Breast epithelium (tissue), 4 donors: ENCODE measurements at regions of chr1 and their contacts with region 1.

Region 1: GRCh38 chr1:28886731-28887418 is 27.5 kb upstream of the EPB41 start:
- DNase-seq: peak; percentile 82 to 87
- H3K4me3 ChIP-seq: peak overlapping the region; percentile 60 to 84 (median 82)
- H3K27ac ChIP-seq: peak overlapping the region; percentile 70 to 86
- H3K4me1 ChIP-seq: no peaks in the 10 kb centered on the region
- H3K27me3 ChIP-seq: no peaks in the 10 kb centered on the region
- CTCF ChIP-seq: peak in 1 of 3 donors; percentile 21
- POLR2A ChIP-seq: no peak

Region 2: DNA sequence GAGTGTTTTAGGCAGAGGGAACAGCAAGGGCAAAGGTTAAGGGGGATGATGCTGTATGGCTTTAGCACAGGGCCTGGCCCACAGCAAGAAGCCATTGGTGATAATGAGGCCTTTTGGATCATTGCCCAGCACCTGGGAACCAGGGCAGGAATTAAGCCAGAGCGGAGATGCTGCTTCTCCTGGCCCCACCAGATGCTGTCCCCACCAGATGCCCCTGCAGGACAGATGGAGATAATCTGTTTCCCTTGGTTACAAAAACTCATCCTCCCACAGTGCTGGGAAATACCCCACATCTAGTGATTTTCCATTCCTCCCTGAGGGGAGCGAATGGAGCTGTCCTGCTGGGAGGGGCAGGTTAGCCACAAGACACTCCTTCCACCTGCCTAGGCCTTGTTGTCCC is 56.1 kb before region 1 on chr1:
- intact Hi-C with region 1: no loop called
- DNase-seq: no peak
- H3K4me3 ChIP-seq: no peak overlapping the region
- H3K27ac ChIP-seq: no peak overlapping the region
- H3K4me1 ChIP-seq: no peaks in the 10 kb centered on the region
- H3K27me3 ChIP-seq: no peaks in the 10 kb centered on the region
- CTCF ChIP-seq: no peak
- POLR2A ChIP-seq: no peak

Region 3: GRCh38 chr1:28914228-28915030 is 27.6 kb after region 1 on chr1 and contains the start of gene EPB41:
- intact Hi-C with region 1: no loop called
- DNase-seq: peak; percentile 82 to 88
- H3K4me3 ChIP-seq: peak within 1 kb of the TSS; percentile 45 to 90 (median 80)
- H3K27ac ChIP-seq: peak within 1 kb of the TSS; percentile 59 to 69
- H3K4me1 ChIP-seq: no peaks in the 10 kb centered on the region
- H3K27me3 ChIP-seq: no peaks in the 10 kb centered on the region
- CTCF ChIP-seq: no peak
- POLR2A ChIP-seq: no peak
- total RNA-seq, gene EPB41: 36.2 to 67.2 (median 51.8) TPM

Region 4: DNA sequence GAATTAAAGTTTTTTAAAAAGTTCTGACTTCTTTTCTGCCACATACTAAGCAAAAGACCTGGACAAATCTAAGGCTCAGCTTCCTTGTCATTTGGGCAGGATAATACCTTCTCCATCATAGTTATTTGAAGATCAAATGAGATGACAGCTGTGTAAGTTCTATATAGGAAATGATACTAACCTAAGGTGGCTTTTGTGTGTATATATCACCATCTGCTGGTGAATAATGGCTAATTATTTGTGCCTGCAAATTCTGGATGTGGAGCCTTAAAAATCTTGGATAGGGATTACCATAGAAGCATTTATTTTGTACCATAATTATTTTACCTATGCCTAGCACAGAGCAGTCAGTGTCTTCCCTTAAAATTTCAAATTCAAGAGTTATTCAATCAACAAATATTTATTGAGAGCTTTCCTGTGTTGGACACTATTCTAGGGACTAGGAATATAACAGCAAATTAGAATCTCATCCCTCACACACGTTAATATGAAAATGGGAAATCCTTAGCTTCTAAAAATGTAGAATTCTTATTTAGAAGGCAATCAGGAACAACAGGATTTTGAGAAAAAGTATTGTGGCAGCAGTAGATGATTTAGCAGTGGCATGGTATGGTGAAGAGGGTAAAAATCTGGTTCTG is 147.1 kb after region 1 on chr1:
- intact Hi-C with region 1: loop called (anchors 10 kb)
- DNase-seq: no peak
- H3K4me3 ChIP-seq: no peak overlapping the region
- H3K27ac ChIP-seq: no peak overlapping the region
- H3K4me1 ChIP-seq: no peaks in the 10 kb centered on the region
- H3K27me3 ChIP-seq: no peaks in the 10 kb centered on the region
- CTCF ChIP-seq: peak; percentile 8 to 75 (median 63)
- POLR2A ChIP-seq: no peak

Region 5: DNA sequence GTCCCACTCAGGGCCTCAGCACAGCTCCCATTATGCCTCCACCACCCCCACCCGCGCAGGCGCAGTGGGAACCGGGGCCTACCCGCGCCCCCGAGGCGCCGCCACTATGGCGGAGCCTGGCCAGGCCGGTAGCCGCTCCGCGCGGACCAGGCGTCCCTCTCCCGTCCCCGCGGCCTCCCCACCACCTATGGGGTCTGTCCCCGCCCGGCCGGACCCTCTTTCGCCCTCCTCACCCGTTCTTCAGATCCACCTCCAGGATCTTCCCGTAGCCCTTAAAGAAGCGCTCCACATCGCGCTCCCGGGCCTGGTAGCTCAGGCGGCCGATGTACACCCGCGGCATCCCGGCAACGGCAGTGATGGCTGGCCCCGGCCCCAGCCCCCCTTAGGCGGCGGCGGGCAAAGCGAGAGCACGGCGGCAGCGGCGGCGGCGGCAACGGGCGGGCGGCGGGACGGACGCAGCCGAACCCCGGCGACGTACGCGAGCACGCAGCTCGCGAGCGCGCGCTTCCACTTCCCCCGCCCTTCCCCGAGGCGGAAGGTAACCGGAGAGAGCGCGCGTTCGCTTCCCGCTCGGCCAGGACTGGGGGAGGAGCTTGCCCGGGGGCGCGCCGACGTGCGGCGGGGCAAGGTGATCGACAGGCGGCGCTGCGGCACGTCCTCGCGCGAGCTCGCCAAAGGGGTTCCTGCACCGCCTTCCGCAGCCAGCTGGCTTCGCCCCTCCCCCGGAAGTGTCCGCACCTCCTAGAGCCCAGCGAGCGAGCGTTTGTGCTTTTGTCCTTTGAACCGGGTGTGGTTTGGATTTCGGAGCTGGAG is 294.7 kb after region 1 on chr1 and contains the start of gene SRSF4:
- intact Hi-C with region 1: loop called (anchors 2 kb)
- DNase-seq: peak; percentile 98 to 99
- H3K4me3 ChIP-seq: peak within 1 kb of the TSS; percentile 84 to 97 (median 97)
- H3K27ac ChIP-seq: peak within 1 kb of the TSS; percentile 100
- H3K4me1 ChIP-seq: peaks cover 0 to 9% of the 10 kb centered on the region in 2 donors
- H3K27me3 ChIP-seq: no peaks in the 10 kb centered on the region
- CTCF ChIP-seq: peak; percentile 58 to 79 (median 78)
- POLR2A ChIP-seq: peak; percentile 27
- total RNA-seq, gene SRSF4: 79.7 to 86.2 (median 85.2) TPM

Region 6: DNA sequence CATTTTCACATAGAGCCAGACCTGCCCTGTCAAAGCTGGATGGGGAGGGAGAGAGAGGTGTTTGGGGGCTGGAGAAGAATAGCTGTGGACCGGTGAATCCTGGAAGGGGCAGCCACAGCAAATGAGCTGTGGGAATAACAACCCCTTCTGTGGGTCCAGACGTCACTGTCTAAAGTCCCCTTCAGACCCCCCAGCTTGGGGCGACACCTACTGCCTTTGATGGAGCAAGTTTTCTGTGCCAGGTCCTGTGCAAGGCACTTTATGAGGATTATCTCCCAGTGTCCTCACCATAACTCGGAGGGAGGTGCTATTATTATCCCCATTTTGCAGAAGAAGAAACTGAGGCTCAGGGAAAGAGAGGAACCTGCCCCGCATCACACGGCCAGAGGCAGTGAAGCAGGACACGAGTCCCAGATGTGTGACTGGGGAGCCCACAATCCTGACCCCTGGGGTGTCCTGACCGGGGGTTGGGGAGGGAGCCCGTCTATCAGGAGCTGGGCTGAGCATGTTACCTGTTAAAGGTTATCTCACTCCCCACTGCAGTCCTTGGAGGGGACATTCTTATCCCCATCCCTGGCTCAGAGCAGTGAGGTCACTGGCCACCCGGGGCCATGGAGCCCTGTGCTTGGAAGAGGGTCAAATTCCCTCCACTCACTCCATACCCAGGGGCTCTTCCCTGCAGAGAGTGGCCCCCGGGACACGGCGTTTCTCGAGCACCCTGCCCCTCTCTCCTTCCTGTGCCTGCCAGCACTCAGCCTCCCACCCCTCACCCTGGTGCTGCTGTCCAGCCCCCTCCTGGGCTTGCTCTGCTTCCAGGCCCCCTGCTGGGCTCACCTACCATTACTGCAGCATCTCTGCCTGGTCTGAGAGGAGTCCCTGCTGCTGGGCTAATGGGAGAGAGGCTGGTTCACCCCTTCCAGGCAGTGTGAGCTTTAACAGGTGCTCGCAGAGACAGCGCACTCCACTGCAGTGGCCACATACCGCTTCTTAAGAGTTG is 482.4 kb after region 1 on chr1:
- intact Hi-C with region 1: no loop called
- DNase-seq: no peak
- H3K4me3 ChIP-seq: no peak overlapping the region
- H3K27ac ChIP-seq: no peak overlapping the region
- H3K4me1 ChIP-seq: no peaks in the 10 kb centered on the region
- H3K27me3 ChIP-seq: peaks cover 0 to 17% of the 10 kb centered on the region in 2 donors
- CTCF ChIP-seq: no peak
- POLR2A ChIP-seq: no peak